HepG2 (cell line): ENCODE measurements at regions of chr19 and their contacts with region 1.

Region 1: GRCh38 chr19:18557474-18558201 is at the start of gene KXD1:
- DNase-seq: peak; percentile 95
- ATAC-seq: peak; percentile 95
- H3K4me3 ChIP-seq: peak within 1 kb of the TSS; percentile 69 to 90 (median 86)
- H3K27ac ChIP-seq: peak within 1 kb of the TSS; percentile 50
- H3K4me1 ChIP-seq: peaks cover 44% of the 10 kb centered on the region
- H3K27me3 ChIP-seq: no peaks in the 10 kb centered on the region; a peak in 1 of 5 replicates
- CTCF ChIP-seq: 0 out of 2 replicates have a peak, but pooled peaks have one; percentile 6
- EP300 ChIP-seq: 0 out of 4 replicates have a peak, but pooled peaks of 1 of the 2 experiments have one; percentile 31
- POLR2A ChIP-seq: peak in 1 of 2 experiments; percentile 62; a peak in 2 of 4 replicates
- RAD21 ChIP-seq: no peak
- total RNA-seq, gene KXD1: 44.6 and 53.1 TPM in 2 replicates

Region 2: DNA sequence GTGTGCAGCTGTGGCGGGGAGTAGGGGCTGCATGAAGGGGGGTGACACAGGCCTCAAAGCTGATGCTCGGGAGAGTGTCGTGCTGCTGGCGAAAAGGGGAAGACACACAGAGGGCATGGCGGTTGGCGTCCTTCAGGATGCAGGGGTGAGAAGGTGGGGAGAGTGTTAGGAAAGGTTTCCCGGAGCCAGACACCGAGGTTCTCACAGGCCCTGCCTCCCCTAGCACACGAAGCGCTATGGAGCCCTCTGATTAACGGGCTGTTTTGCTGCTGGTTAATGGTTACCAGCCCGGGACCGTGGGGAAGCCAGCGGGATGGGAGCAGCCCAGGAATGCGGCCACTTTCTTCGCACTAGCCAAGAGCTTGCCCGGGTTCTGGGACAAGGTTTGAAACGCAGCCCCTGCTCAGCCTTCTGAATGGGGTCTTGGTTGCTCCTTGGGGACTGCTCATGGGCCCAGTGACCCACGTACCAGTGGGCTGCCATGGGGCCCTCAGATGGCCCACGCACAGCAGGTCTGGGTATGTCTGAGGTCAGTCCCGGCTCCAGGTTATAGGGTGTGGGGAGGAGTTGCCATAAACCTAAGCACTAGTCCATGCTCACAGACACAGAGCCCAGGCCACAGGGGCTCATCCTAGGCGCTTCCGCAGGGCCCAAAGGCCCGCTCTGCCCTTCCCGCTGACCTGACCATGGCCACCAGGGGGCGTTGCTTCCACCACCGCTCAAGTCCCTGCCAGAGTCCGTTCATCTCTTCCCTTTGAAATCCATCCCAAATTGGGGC is 88.4 kb before region 1 on chr19:
- CTCF ChIA-PET with region 1: no interaction called
- POLR2A ChIA-PET with region 1: interaction called, 7 read pairs
- in situ Hi-C with region 1: no loop called
- intact Hi-C with region 1: loop called (anchors 1 kb)
- DNase-seq: peak; percentile 85
- ATAC-seq: peak; percentile 87
- H3K4me3 ChIP-seq: peak overlapping the region; percentile 36 to 65 (median 38); a peak in 5 of 6 replicates
- H3K27ac ChIP-seq: peak overlapping the region; percentile 45
- H3K4me1 ChIP-seq: peaks cover 74% of the 10 kb centered on the region
- H3K27me3 ChIP-seq: no peaks in the 10 kb centered on the region
- CTCF ChIP-seq: peak; percentile 90
- EP300 ChIP-seq: no peak
- POLR2A ChIP-seq: no peak
- RAD21 ChIP-seq: peak; percentile 56

Region 3: DNA sequence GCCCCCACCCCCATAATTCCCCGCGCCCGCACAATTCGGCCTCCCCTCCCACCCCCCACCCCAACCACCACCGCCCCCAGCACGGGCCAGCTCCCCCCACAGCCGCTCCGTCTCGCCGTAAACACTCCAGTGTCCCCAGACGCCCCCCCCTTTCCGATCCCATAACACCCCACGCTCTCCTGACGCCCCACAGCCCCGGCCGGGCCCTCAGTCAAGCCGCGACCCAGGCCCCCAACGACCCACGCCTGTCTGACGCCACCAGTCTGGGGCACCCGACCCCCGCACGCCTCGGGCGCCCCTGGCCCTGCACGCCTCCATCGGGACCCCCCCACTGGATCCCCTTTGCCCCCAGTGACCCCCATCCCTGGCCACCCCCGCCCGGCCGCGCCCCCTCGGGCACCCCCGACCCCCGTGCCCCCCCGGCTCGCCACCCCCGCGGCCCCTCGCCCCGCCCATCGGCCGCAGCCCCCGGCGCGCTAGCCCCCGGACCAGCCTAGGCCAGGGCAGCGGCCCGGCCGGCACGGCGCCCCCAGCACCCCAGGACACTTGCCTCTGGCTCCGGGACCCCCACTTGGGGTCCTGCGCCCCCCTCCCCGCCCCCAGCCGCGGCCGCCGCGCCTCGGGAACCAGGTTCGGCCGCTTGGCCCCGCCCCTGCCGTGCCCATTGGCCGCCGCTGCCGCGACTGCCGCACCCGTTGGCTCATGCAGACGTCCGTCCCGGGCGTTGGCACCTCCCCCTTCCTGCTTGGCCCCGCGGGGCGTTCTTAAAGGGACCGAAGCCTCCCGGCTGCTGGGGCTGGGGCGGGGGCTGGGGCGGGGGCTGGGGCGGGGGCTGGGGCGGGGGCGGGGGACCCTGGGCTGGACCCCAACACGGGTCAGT is 14.5 kb before region 1 on chr19 and contains the start of gene FKBP8:
- CTCF ChIA-PET with region 1: no interaction called
- POLR2A ChIA-PET with region 1: interaction called, 13 read pairs
- in situ Hi-C with region 1: no loop called
- intact Hi-C with region 1: loop called (anchors 2 kb)
- DNase-seq: peak; percentile 67
- ATAC-seq: peak; percentile 97
- H3K4me3 ChIP-seq: peak within 1 kb of the TSS; percentile 65 to 90 (median 81)
- H3K27ac ChIP-seq: no peak within 1 kb of the TSS
- H3K4me1 ChIP-seq: peaks cover 37% of the 10 kb centered on the region
- H3K27me3 ChIP-seq: no peaks in the 10 kb centered on the region; a peak in 1 of 5 replicates
- CTCF ChIP-seq: no peak
- EP300 ChIP-seq: no peak
- POLR2A ChIP-seq: no peak
- RAD21 ChIP-seq: no peak
- total RNA-seq, gene FKBP8: 75.1 and 81.7 TPM in 2 replicates

Region 4: GRCh38 chr19:18571564-18572300 is 14.1 kb after region 1 on chr19 and contains the start of gene UBA52:
- CTCF ChIA-PET with region 1: no interaction called
- POLR2A ChIA-PET with region 1: interaction called, 55 read pairs
- in situ Hi-C with region 1: no loop called
- intact Hi-C with region 1: no loop called
- DNase-seq: peak; percentile 93
- ATAC-seq: peak; percentile 95
- H3K4me3 ChIP-seq: peak within 1 kb of the TSS; percentile 75 to 90 (median 85)
- H3K27ac ChIP-seq: peak within 1 kb of the TSS; percentile 75
- H3K4me1 ChIP-seq: peaks cover 20% of the 10 kb centered on the region
- H3K27me3 ChIP-seq: no peaks in the 10 kb centered on the region; a peak in 1 of 5 replicates
- CTCF ChIP-seq: peak; percentile 48
- EP300 ChIP-seq: peak in 1 of 2 experiments; percentile 41; a peak in 1 of 4 replicates
- POLR2A ChIP-seq: peak; percentile 68 to 88; a peak in 3 of 4 replicates
- RAD21 ChIP-seq: peak; percentile 47
- total RNA-seq, gene UBA52: 959 and 1,184 TPM in 2 replicates

Region 5: DNA sequence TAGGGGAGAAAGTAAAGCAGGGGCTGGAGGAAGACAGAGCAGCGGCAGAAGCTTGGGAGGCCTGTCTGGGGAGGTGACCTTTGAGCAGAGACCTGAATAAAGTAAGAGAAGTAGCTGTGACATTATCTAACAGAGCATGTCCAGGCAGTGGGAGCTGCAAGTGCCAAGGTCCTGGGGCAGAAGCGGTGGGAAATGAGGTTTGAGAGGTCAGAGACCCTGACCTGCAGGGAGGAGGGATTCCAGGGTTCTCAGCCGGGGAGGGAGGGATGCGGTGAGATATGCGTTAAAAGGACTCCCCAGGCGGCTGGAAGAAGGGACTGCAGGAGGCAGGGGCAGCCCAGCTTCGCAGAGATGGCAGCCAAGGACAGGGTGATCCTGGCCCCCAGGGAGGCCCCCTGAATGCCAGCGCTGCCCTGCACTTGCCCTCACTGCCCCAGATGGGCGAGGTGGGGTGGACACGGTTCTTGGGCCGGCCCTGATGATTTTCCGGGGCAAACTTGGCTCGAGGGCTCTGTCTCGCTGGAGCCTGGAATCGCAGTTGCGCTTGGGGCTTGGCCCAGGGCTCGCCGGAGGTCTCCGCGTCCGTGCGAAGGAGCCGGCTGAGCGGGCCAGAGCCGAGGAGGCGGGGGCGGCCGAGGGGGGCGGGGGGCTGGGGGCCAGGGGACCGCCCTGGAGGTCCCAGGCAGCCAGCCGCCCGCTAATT is 45.8 kb after region 1 on chr19:
- CTCF ChIA-PET with region 1: no interaction called
- POLR2A ChIA-PET with region 1: no interaction called
- in situ Hi-C with region 1: no loop called
- intact Hi-C with region 1: no loop called
- DNase-seq: no peak
- ATAC-seq: peak; percentile 46
- H3K4me3 ChIP-seq: peak overlapping the region in 1 of 3 experiments; percentile 28; a peak in 2 of 6 replicates
- H3K27ac ChIP-seq: no peak overlapping the region
- H3K4me1 ChIP-seq: peaks cover 35% of the 10 kb centered on the region
- H3K27me3 ChIP-seq: no peaks in the 10 kb centered on the region; a peak in 1 of 5 replicates
- CTCF ChIP-seq: no peak
- EP300 ChIP-seq: no peak
- POLR2A ChIP-seq: no peak
- RAD21 ChIP-seq: no peak

Region 6: GRCh38 chr19:18697680-18698079 is 140.0 kb after region 1 on chr19:
- CTCF ChIA-PET with region 1: no interaction called
- POLR2A ChIA-PET with region 1: no interaction called
- in situ Hi-C with region 1: no loop called
- intact Hi-C with region 1: no loop called
- DNase-seq: no peak
- ATAC-seq: no peak
- H3K4me3 ChIP-seq: no peak overlapping the region
- H3K27ac ChIP-seq: no peak overlapping the region
- H3K4me1 ChIP-seq: no peaks in the 10 kb centered on the region
- H3K27me3 ChIP-seq: no peaks in the 10 kb centered on the region
- CTCF ChIP-seq: no peak
- EP300 ChIP-seq: no peak
- POLR2A ChIP-seq: no peak
- RAD21 ChIP-seq: no peak

Region 7: DNA sequence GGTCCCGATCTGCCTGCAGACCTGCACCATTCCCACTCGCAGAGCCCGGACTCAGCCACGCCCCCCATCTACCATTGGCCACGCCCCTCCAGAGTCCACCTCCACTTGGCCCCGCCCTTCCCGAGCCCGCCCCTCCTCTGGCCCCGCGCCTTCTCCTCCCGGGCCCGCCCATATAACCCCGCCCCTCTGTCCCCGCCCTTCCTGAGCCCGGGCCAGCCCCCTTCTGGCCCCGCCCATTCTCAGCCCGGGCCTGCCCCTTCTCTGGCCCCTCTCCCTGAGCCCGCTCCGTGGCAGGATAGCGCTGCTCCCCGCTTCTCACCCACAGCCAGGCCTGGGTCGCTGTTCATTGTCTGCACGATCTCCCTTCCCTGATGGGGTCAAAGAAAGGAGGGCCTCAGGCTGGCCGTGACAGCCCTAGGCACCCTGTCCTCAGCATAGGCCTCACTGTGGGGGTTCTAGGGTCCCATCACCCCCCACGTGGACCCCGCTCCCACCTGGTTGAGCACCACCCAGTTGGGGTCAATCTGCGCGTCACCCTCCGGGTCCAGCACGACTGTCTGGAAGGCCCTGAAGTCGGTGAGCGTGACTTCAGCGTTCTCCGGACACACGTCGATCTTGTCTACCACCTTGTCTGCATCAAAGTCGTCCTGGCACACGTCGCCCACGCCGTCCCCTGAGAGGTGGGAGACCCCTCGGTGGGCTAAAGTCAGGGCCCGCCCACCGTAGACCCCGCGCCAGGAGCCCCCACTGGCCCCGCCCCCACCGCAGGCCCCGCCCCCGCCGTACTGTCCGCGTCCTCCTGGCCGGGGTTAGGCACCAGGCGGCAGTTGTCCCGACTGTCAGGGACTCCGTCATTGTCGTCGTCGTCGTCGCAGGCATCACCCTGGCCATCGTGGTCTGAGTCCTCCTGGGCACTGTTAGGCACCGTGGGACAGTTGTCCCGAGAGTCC is 227.8 kb after region 1 on chr19:
- CTCF ChIA-PET with region 1: no interaction called
- POLR2A ChIA-PET with region 1: no interaction called
- in situ Hi-C with region 1: no loop called
- intact Hi-C with region 1: no loop called
- DNase-seq: peak; percentile 65
- ATAC-seq: peak; percentile 70
- H3K4me3 ChIP-seq: peak overlapping the region; percentile 32 to 81 (median 52); a peak in 5 of 6 replicates
- H3K27ac ChIP-seq: no peak overlapping the region
- H3K4me1 ChIP-seq: peaks cover 41% of the 10 kb centered on the region
- H3K27me3 ChIP-seq: peaks cover 11 to 36% of the 10 kb centered on the region in 2 experiments
- CTCF ChIP-seq: 0 out of 2 replicates have a peak, but pooled peaks have one; percentile 7
- EP300 ChIP-seq: no peak
- POLR2A ChIP-seq: no peak
- RAD21 ChIP-seq: no peak